Mammary epithelial cell (primary cell): ENCODE measurements at regions of chr5 and their contacts with region 1.

Region 1: DNA sequence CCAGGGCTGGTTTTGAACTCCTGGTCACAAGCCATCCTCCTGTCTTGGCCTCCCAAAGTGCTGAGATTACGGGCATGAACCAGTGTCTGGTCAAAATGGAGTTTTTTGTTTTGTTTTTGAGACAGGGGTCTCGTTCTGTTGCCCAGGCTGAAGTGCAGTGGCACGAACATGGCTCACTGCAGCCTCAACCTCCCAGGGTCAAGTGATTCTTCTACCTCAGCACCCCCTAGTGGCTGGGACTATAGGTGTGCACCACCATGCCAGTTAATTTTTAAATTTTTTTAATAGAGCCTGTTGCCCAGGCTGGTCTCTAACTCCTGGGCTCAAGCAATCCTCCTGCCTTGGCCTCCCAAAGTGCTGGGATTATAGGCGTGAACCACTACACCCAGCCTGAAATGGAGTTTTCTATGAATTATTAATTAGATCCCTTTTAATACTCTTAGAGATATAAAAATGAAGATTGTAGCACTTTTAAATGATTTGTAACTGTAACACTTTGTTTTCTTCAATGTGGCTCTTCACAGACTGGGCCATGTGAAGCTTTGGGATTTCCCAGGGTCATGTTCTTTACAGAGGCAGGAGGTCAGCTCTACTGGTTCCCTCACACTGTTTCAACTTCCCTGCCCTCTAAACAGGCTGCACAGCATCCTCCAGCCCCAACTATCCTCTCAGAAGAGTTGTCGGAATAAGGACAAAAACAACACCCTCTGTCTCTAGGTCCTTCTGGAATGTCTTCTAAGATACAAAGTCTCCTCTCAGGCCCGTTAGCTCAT is 32.7 kb upstream of the SPARC start:
- DNase-seq: no peak
- H3K4me3 ChIP-seq: no peak overlapping the region
- H3K27ac ChIP-seq: no peak overlapping the region
- H3K4me1 ChIP-seq: peaks cover 12% of the 10 kb centered on the region
- H3K27me3 ChIP-seq: no peaks in the 10 kb centered on the region
- CTCF ChIP-seq: peak; percentile 51 to 70

Region 2: GRCh38 chr5:151686674-151687407 is 32.6 kb before region 1 on chr5 and contains the start of gene SPARC:
- CTCF ChIA-PET with region 1: no interaction called
- dilution Hi-C with region 1: no loop called
- in situ Hi-C with region 1: no loop called
- intact Hi-C with region 1: loop called (anchors 2 kb)
- DNase-seq: peak; percentile 80
- H3K4me3 ChIP-seq: peak within 1 kb of the TSS; percentile 60 to 70 (median 62)
- H3K27ac ChIP-seq: peak within 1 kb of the TSS; percentile 81
- H3K4me1 ChIP-seq: peaks cover 42% of the 10 kb centered on the region
- H3K27me3 ChIP-seq: no peaks in the 10 kb centered on the region
- CTCF ChIP-seq: no peak
- total RNA-seq, gene SPARC: 222 to 382 TPM

Region 3: DNA sequence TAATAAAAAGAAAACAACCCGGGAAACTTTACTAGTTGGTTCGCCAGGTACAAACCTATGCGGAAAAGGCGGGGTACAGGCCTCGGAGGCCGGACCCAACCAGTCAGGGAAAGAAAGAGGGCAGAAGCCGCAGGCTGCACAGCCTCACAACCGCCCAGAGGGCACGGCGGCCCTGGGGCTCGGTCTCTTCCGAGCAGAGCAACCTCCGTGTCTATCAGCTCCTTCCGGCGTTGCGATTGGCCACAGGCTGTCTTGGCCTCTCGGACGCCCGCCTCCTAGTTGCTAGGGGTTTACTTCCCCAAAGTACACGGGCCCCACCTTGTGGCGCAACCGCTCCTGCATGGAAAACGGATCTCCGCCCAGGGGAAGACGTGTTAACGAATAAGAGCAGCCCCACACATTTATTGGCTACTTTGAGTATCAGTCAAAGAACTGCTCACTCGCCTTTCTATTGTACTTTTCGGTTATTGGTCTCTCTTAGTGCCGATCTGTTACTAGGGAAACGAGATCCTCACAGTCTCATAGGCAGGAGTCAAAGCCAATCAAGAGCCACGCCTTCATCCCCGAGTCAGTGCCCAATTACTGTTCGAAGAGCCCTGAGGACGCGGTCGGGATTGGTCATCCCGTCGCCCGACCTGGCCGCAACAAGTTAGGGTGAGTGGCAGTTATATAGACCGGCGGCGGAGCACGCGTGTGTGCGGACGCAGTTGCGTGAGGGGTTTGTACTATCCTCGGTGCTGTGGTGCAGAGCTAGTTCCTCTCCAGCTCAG is 52.0 kb after region 1 on chr5 and contains the start of gene G3BP1:
- CTCF ChIA-PET with region 1: no interaction called
- dilution Hi-C with region 1: no loop called
- in situ Hi-C with region 1: no loop called
- intact Hi-C with region 1: loop called (anchors 2 kb)
- DNase-seq: peak; percentile 100
- H3K4me3 ChIP-seq: peak within 1 kb of the TSS; percentile 63 to 93 (median 80)
- H3K27ac ChIP-seq: peak within 1 kb of the TSS; percentile 84
- H3K4me1 ChIP-seq: peaks cover 26% of the 10 kb centered on the region
- H3K27me3 ChIP-seq: no peaks in the 10 kb centered on the region
- CTCF ChIP-seq: peak; percentile 36 to 77
- total RNA-seq, gene G3BP1: 193 to 252 TPM

Region 4: GRCh38 chr5:151799407-151799806 is 80.0 kb after region 1 on chr5:
- CTCF ChIA-PET with region 1: no interaction called
- dilution Hi-C with region 1: no loop called
- in situ Hi-C with region 1: no loop called
- intact Hi-C with region 1: no loop called
- DNase-seq: peak; percentile 25
- H3K4me3 ChIP-seq: no peak overlapping the region
- H3K27ac ChIP-seq: no peak overlapping the region
- H3K4me1 ChIP-seq: peaks cover 5% of the 10 kb centered on the region
- H3K27me3 ChIP-seq: no peaks in the 10 kb centered on the region
- CTCF ChIP-seq: no peak

Region 5: GRCh38 chr5:151970885-151971284 is 251.5 kb after region 1 on chr5:
- CTCF ChIA-PET with region 1: no interaction called
- dilution Hi-C with region 1: no loop called
- in situ Hi-C with region 1: no loop called
- intact Hi-C with region 1: no loop called
- DNase-seq: no peak
- H3K4me3 ChIP-seq: no peak overlapping the region
- H3K27ac ChIP-seq: no peak overlapping the region
- H3K4me1 ChIP-seq: no peaks in the 10 kb centered on the region
- H3K27me3 ChIP-seq: no peaks in the 10 kb centered on the region
- CTCF ChIP-seq: no peak